ENCODE measurements at regions of chr14 and their contacts with region 1.

Region 1: GRCh38 chr14:22472935-22473854 is 115.8 kb downstream of the DAD1 start:
- DNase-seq: peak; percentile 82 to 91 (median 87)
- H3K4me3 ChIP-seq: no peak overlapping the region
- H3K27ac ChIP-seq: no peak overlapping the region
- H3K4me1 ChIP-seq: peaks cover 7 to 52% (median 16%) of the 10 kb centered on the region in 4 experiments
- H3K27me3 ChIP-seq: no peaks in the 10 kb centered on the region

Region 2: GRCh38 chr14:22386924-22387775 is 86.0 kb before region 1 on chr14:
- CTCF ChIA-PET with region 1: interaction called, 366 read pairs
- POLR2A ChIA-PET with region 1: no interaction called
- DNase-seq: peak; percentile 82 to 92 (median 86)
- H3K4me3 ChIP-seq: no peak overlapping the region
- H3K27ac ChIP-seq: no peak overlapping the region
- H3K4me1 ChIP-seq: peaks cover 0 to 2% (median under 1%) of the 10 kb centered on the region in 4 experiments
- H3K27me3 ChIP-seq: peaks cover 0 to 2% (median 0%) of the 10 kb centered on the region in 5 experiments

Region 3: DNA sequence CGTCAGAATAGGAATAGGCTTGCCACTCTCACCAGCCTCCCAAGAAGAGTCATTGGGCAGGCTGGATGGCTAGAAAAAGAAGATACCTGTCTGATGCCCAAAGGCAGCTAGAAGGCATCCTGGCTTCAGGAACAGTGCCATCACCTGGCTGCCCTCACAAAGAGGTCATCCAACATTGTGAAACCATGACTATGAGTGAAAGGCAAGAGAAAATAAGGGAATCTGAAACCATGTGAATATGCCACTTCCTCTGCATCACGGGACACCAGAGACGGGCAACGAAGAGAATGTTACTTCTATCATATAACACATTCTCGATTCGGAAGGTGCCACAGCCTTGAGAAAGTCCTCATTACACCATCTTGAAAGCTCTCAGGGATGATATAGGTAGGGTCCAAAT is 66.2 kb before region 1 on chr14:
- CTCF ChIA-PET with region 1: interaction called, 16 read pairs
- POLR2A ChIA-PET with region 1: no interaction called
- DNase-seq: no peak
- H3K4me3 ChIP-seq: no peak overlapping the region
- H3K27ac ChIP-seq: no peak overlapping the region
- H3K4me1 ChIP-seq: peaks cover 0 to 2% (median 0%) of the 10 kb centered on the region in 4 experiments
- H3K27me3 ChIP-seq: no peaks in the 10 kb centered on the region

Region 4: GRCh38 chr14:22418631-22419030 is 54.6 kb before region 1 on chr14:
- CTCF ChIA-PET with region 1: interaction called, 31 read pairs
- POLR2A ChIA-PET with region 1: no interaction called
- DNase-seq: peak; percentile 19 to 82 (median 57)
- H3K4me3 ChIP-seq: peak overlapping the region in 2 of 7 experiments; percentile 2 to 19
- H3K27ac ChIP-seq: peak overlapping the region in 1 of 2 experiments; percentile 7
- H3K4me1 ChIP-seq: peaks cover 19 to 69% (median 59%) of the 10 kb centered on the region in 4 experiments
- H3K27me3 ChIP-seq: no peaks in the 10 kb centered on the region

Region 5: GRCh38 chr14:22448905-22449599 is 24.1 kb before region 1 on chr14:
- CTCF ChIA-PET with region 1: interaction called, 16 read pairs
- POLR2A ChIA-PET with region 1: no interaction called
- DNase-seq: no peak
- H3K4me3 ChIP-seq: no peak overlapping the region
- H3K27ac ChIP-seq: peak overlapping the region in 1 of 2 experiments; percentile 67
- H3K4me1 ChIP-seq: peaks cover 15 to 43% (median 30%) of the 10 kb centered on the region in 4 experiments
- H3K27me3 ChIP-seq: no peaks in the 10 kb centered on the region

Region 6: GRCh38 chr14:22505697-22506377 is 32.6 kb after region 1 on chr14:
- CTCF ChIA-PET with region 1: no interaction called
- POLR2A ChIA-PET with region 1: no interaction called
- DNase-seq: no peak
- H3K4me3 ChIP-seq: no peak overlapping the region
- H3K27ac ChIP-seq: no peak overlapping the region
- H3K4me1 ChIP-seq: no peaks in the 10 kb centered on the region
- H3K27me3 ChIP-seq: peaks cover 0 to 2% (median 0%) of the 10 kb centered on the region in 5 experiments

Region 7: DNA sequence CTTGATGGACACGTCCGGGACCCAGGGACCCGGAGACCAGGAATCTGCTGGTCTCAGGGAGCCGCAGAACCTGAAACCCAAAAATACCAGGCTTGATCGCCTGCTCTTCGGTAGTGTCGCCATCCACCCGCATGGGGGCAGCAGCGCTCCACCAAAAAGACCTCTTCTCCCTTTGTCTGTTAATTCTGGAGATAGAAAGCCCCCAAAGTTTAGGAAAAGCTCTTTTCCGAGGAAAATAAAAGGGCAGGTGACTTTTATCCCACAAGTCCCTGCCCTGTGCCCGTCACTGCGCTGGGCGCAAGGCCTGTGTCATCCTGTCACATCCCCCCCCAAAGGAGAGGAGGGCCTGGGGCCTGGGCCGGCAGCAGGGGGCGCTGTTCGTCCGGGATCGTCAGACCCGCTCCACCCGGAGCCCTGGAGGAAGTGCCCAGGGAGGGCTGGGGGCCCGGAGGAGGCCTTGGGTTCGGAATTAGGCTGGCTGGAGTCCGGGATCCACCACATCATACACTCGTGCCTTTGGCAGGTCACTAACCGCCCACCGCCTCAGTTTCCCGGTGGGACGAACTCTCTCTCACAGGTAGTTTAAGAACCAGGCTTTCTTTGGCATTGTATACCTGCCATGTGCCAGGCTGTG is 83.9 kb after region 1 on chr14:
- CTCF ChIA-PET with region 1: interaction called, 17 read pairs
- POLR2A ChIA-PET with region 1: interaction called, 3 read pairs
- DNase-seq: peak; percentile 84 to 88 (median 85)
- H3K4me3 ChIP-seq: peak overlapping the region in 6 of 7 experiments; percentile 0 to 76 (median 54)
- H3K27ac ChIP-seq: peak overlapping the region; percentile 61 to 84
- H3K4me1 ChIP-seq: peaks cover 30 to 78% (median 67%) of the 10 kb centered on the region in 4 experiments
- H3K27me3 ChIP-seq: no peaks in the 10 kb centered on the region

Measured in common myeloid progenitor, CD34-positive (primary cell).